MCF 10A (cell line): ENCODE measurements at regions of chr12 and their contacts with region 1.

Region 1: DNA sequence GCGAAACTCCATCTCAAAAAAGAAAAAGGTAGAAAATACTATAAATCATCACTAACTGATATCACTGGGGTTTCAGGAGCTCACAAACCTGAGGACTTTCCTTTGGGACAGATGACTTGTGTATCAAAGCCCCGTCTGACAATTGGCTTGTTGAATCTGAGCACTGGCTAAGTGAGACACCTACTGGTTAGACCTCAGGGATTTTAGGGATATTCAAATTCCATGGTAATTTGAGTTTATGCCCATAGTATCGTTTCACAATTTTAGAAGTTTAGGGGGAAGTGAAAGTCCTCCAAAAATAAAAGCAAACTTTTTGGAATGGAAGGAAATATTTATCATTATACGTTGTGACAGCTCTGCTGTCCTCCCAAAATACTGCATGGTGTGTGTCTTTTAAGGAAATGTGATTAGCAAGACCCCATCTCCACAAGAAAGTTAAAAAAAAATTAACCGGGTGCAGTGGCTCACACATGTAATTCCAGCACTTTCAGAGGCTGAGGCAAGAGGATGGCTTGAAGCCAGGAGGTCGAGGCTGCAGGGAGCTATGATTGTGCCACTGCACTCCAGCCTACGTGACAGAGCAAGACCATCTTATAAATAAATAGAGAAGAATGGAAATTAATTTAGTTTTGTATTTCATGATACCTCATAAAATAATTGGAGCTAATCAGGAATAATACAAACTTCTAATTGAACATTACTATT is 49.2 kb downstream of the FBXL14 start:
- DNase-seq: peak; percentile 58
- H3K4me3 Mint-ChIP-seq: no peak overlapping the region
- H3K27ac Mint-ChIP-seq: no peak overlapping the region
- H3K4me1 Mint-ChIP-seq: peaks cover 11% of the 10 kb centered on the region
- H3K27me3 Mint-ChIP-seq: no peaks in the 10 kb centered on the region
- CTCF ChIP-seq: peak; percentile 37

Region 2: GRCh38 chr12:1527789-1528188 is 17.4 kb before region 1 on chr12:
- CTCF ChIA-PET with region 1: interaction called, 4 read pairs
- POLR2A ChIA-PET with region 1: interaction called, 10 read pairs
- intact Hi-C with region 1: no loop called
- DNase-seq: peak; percentile 54
- H3K4me3 Mint-ChIP-seq: no peak overlapping the region
- H3K27ac Mint-ChIP-seq: no peak overlapping the region
- H3K4me1 Mint-ChIP-seq: peaks cover 10% of the 10 kb centered on the region
- H3K27me3 Mint-ChIP-seq: peaks cover 24% of the 10 kb centered on the region
- CTCF ChIP-seq: no peak